H1 (cell line): ENCODE measurements at regions of chr20 and their contacts with region 1.

Region 1: GRCh38 chr20:645318-646106 is 7.5 kb downstream of the SRXN1 start:
- DNase-seq: peak; percentile 82 to 96
- H3K4me3 ChIP-seq: no peak overlapping the region
- H3K27ac ChIP-seq: no peak overlapping the region
- H3K4me1 ChIP-seq: peaks cover 0 to 4% (median 1%) of the 10 kb centered on the region in 4 experiments; a peak in 2 of 7 replicates
- H3K27me3 ChIP-seq: no peaks in the 10 kb centered on the region
- CTCF ChIP-seq: peak; percentile 87 to 96 (median 96)
- EP300 ChIP-seq: peak in 1 of 2 experiments; percentile 50; a peak in 1 of 3 replicates
- POLR2A ChIP-seq: no peak
- RAD21 ChIP-seq: peak; percentile 94 to 95

Region 2: DNA sequence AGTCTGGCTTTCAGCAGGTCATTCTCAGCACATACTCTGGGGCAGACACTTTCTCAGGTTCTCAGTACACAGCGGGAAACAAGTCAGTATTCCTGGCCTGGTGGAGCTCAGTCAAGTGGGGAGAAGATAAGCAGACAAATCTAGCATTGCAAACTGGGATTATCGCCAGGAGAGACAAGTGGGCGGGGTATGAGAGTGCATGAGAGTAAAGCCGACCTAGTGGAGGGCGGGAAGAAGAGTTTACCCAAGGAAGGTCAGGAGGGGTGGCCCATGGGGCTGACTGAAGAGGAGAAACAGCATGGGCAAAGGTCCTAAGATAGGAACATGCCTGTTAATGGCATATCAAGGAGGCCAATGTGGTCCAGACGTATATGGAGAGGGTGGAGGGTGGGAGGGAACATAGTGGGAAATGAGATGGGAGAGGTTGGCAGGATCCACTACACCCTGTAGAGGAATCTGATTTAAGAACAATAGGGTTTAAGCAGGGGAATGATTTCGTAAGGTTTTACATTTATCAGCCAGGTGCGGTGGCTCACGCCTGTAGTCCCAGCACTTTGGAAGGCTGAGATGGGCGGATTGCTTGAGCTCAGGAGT is 89.5 kb before region 1 on chr20:
- CTCF ChIA-PET with region 1: interaction called, 142 read pairs
- POLR2A ChIA-PET with region 1: no interaction called
- DNase-seq: no peak
- H3K4me3 ChIP-seq: no peak overlapping the region
- H3K27ac ChIP-seq: no peak overlapping the region
- H3K4me1 ChIP-seq: no peaks in the 10 kb centered on the region
- H3K27me3 ChIP-seq: no peaks in the 10 kb centered on the region; a peak in 1 of 7 replicates
- CTCF ChIP-seq: no peak
- EP300 ChIP-seq: no peak
- POLR2A ChIP-seq: no peak
- RAD21 ChIP-seq: no peak

Region 3: GRCh38 chr20:571754-572441 is 73.6 kb before region 1 on chr20:
- CTCF ChIA-PET with region 1: interaction called, 40 read pairs
- POLR2A ChIA-PET with region 1: no interaction called
- DNase-seq: peak in 1 of 2 experiments; percentile 63
- H3K4me3 ChIP-seq: 0 out of 8 replicates have a peak overlapping the region, but pooled peaks of 1 of the 4 experiments have one; percentile 13
- H3K27ac ChIP-seq: no peak overlapping the region
- H3K4me1 ChIP-seq: peaks cover 13 to 34% (median 22%) of the 10 kb centered on the region in 4 experiments
- H3K27me3 ChIP-seq: peaks cover 0 to 11% (median 3%) of the 10 kb centered on the region in 4 experiments; a peak in 5 of 7 replicates
- CTCF ChIP-seq: no peak
- EP300 ChIP-seq: no peak
- POLR2A ChIP-seq: no peak
- RAD21 ChIP-seq: no peak

Region 4: DNA sequence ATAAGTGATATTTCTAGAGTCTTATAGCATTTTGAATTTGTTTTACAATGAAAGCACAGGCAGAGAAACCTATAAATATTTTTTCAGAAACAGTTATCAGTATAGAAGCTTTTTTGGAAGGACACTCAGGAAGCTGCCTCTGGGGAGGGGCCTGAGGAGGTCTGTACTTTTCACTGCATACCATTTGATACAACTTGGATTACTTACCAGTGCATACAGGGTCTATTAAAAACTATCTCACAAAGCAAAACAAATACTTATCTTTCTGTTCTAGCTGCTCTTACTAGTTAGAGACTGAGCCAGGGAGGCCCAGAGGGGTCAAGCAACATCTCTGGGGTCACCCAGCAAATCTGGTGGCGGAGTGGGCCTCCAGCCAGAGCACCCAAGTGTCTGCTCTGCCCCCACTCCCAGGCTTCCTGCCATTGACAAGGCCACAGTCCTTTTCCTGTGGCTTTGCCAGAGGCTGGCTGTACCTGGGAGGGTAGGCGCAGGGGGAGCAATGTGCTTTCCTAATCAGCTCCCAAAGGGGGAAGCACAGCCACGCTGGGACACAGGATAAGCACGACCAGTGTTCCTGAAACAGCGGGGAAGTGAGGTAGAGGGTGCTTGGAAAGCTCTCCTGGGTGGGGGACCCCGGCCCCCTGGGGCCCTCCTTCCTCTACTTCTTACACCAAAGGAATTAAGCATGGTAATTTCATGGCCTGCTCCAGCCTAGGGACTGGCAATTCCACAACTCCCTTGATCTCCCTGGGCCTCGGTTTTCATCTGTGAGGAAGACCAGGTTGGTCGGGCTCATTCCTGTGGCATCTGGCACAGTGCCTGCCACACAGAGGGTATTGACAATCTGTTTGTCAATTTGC is 43.2 kb before region 1 on chr20:
- CTCF ChIA-PET with region 1: interaction called, 14 read pairs
- POLR2A ChIA-PET with region 1: no interaction called
- DNase-seq: no peak
- H3K4me3 ChIP-seq: no peak overlapping the region
- H3K27ac ChIP-seq: no peak overlapping the region
- H3K4me1 ChIP-seq: no peaks in the 10 kb centered on the region
- H3K27me3 ChIP-seq: no peaks in the 10 kb centered on the region
- CTCF ChIP-seq: no peak
- EP300 ChIP-seq: no peak
- POLR2A ChIP-seq: no peak
- RAD21 ChIP-seq: no peak

Region 5: GRCh38 chr20:621125-621756 is 24.3 kb before region 1 on chr20:
- CTCF ChIA-PET with region 1: interaction called, 15 read pairs
- POLR2A ChIA-PET with region 1: no interaction called
- DNase-seq: no peak
- H3K4me3 ChIP-seq: no peak overlapping the region
- H3K27ac ChIP-seq: no peak overlapping the region
- H3K4me1 ChIP-seq: 0 out of 7 replicates have a peak, but pooled peaks cover 0 to 5% (median 2%) of the 10 kb centered on the region in 4 experiments
- H3K27me3 ChIP-seq: no peaks in the 10 kb centered on the region
- CTCF ChIP-seq: no peak
- EP300 ChIP-seq: no peak
- POLR2A ChIP-seq: no peak
- RAD21 ChIP-seq: no peak

Region 6: DNA sequence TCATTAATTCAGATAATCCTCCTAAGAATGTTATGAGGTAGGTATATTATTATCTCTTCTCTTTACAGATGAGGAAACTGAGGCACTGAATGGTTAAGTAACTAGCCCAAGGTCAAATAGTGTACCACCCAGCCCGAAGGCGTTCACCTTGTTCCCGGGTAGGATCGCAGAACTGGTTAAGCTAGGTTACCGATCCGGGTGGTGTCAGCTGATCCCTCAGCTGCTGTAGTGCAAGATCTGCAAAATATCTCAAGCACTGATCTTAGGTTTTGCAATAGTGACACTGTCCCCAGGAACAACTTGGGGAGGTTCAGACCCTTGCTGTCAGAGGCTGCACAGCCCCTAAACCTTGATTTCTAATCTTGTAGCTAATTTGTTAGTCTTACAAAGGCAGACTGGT is 94.6 kb after region 1 on chr20:
- CTCF ChIA-PET with region 1: interaction called, 17 read pairs
- POLR2A ChIA-PET with region 1: no interaction called
- DNase-seq: no peak
- H3K4me3 ChIP-seq: no peak overlapping the region
- H3K27ac ChIP-seq: no peak overlapping the region
- H3K4me1 ChIP-seq: peaks cover 0 to 1% (median 0%) of the 10 kb centered on the region in 4 experiments; a peak in 1 of 7 replicates
- H3K27me3 ChIP-seq: 0 out of 7 replicates have a peak, but pooled peaks cover 0 to 2% (median 0%) of the 10 kb centered on the region in 4 experiments
- CTCF ChIP-seq: no peak
- EP300 ChIP-seq: no peak
- POLR2A ChIP-seq: no peak
- RAD21 ChIP-seq: no peak